Heart right ventricle (tissue), 16 donors: ENCODE measurements at regions of chr9 and their contacts with region 1.

Region 1: GRCh38 chr9:7536310-7536939 is 263.2 kb downstream of the DMAC1 start:
- DNase-seq: peak; percentile 16 to 46
- ATAC-seq: peak in 6 of 8 donors; percentile 34 to 76 (median 68)
- H3K4me3 ChIP-seq: no peak overlapping the region
- H3K27ac ChIP-seq: no peak overlapping the region
- H3K4me1 ChIP-seq: peaks cover 0 to 9% (median 0%) of the 10 kb centered on the region in 9 donors
- H3K27me3 ChIP-seq: no peaks in the 10 kb centered on the region
- CTCF ChIP-seq: peak; percentile 47 to 74 (median 70)

Region 2: DNA sequence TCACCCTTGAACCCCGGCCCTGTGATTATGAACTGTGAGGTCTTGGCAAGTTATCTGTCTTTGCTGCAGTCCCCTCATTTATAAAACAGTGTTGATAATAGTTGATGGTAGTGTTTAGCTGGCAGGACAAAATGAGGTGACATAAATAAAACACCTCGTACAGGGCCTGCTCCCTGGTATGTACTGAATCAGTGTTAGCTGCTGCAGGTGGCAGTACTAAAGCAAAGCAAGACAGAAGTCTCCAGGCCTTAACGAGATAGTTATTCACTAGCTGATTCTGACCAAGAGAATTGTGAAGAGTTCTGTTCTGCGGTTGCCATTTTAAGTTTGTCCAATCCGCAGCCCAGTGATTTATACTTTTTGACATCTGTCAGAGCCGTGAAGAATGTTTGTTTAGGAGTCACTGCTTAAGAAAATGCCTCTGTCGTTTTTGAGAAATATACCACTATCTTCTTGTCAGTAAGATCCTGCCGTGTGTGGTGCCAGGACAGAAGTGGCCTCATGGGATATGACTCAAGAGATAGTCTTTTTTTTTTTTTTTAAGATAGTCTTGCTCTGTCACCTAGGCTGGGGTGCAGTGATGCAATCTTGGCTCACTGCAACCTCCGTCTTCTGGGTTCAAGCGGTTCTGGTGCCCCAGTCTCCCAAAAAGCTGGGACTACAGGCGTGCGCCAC is 702.8 kb before region 1 on chr9:
- intact Hi-C with region 1: loop called in 2 of 10 experiments (anchors 5 to 10 kb)
- DNase-seq: no peak
- ATAC-seq: no peak
- H3K4me3 ChIP-seq: no peak overlapping the region
- H3K27ac ChIP-seq: no peak overlapping the region
- H3K4me1 ChIP-seq: peaks cover 0 to 8% (median 0%) of the 10 kb centered on the region in 9 donors
- H3K27me3 ChIP-seq: no peaks in the 10 kb centered on the region
- CTCF ChIP-seq: no peak

Region 3: DNA sequence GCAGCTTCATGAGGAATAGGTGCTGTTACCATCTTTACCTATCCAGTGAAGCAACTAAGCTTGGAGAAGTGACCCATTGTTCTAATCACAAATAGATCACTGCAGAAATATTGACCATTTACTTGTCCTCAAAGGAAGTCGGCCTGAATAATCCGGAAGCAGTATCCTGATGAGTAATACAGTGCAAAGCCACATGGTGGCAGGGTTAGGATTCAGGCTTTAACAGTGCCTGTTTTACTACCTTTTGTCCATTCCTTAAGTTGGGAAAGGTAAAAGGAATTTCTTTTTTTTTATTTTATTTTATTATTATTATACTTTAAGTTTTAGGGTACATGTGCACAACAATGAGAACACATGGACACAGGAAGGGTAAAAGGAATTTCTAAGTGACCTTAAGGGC is 442.4 kb before region 1 on chr9:
- intact Hi-C with region 1: loop called in 1 of 10 experiments (anchors 10 kb)
- DNase-seq: no peak
- ATAC-seq: peak in 1 of 8 donors; percentile 39
- H3K4me3 ChIP-seq: no peak overlapping the region
- H3K27ac ChIP-seq: no peak overlapping the region
- H3K4me1 ChIP-seq: peaks cover 0 to 15% (median 3%) of the 10 kb centered on the region in 9 donors
- H3K27me3 ChIP-seq: no peaks in the 10 kb centered on the region
- CTCF ChIP-seq: peak in 7 of 9 donors; percentile 10 to 52 (median 45)

Region 4: GRCh38 chr9:7342229-7342628 is 194.2 kb before region 1 on chr9:
- intact Hi-C with region 1: loop called in 1 of 10 experiments (anchors 1 kb)
- DNase-seq: no peak
- ATAC-seq: no peak
- H3K4me3 ChIP-seq: no peak overlapping the region
- H3K27ac ChIP-seq: peak overlapping the region in 1 of 10 donors; percentile 25
- H3K4me1 ChIP-seq: peaks cover 0 to 17% (median 0%) of the 10 kb centered on the region in 9 donors
- H3K27me3 ChIP-seq: no peaks in the 10 kb centered on the region
- CTCF ChIP-seq: peak in 7 of 9 donors; percentile 17 to 55 (median 36)

Region 5: GRCh38 chr9:7405924-7406604 is 130.4 kb before region 1 on chr9:
- intact Hi-C with region 1: loop called in 5 of 10 experiments (anchors 5 to 10 kb)
- DNase-seq: no peak
- ATAC-seq: peak in 1 of 8 donors; percentile 17
- H3K4me3 ChIP-seq: no peak overlapping the region
- H3K27ac ChIP-seq: peak overlapping the region in 1 of 10 donors; percentile 41
- H3K4me1 ChIP-seq: peaks cover 0 to 28% (median 11%) of the 10 kb centered on the region in 9 donors
- H3K27me3 ChIP-seq: no peaks in the 10 kb centered on the region
- CTCF ChIP-seq: no peak